CD8-positive, alpha-beta T cell (primary cell): ENCODE measurements at regions of chr4 and their contacts with region 1.

Region 1: DNA sequence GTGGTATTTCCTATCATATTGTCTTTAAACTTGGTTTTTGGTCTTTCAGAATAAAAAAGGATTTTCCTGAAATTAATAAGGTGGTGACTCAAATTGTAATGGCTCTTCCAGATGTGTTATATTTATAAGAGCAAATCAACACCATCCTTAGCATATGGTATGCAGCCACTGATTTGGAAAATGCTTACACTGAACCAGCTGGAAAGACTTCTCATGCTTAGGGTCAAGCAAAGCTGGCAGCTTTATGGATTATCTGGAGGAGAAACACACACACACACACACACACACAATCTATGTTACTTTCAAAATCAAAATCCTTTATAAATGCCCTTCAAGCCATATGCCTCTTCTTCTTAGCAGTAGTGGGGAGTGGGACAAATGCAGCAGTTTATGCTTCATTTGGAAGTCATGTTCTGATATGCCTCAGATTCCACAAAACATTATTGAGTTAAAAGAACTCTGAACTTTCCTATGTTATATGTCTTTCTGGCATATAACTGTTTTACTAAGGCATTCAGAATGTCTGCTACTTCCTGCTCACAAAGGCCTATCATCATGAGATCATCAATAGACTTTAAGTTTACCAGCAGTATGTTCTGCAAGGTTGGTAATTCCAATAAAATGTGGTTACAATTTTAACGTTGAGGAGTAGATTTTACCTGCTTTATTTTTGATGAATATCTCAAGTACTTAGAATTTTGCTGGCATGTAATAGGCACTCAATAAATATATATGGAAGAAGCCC is 72.9 kb upstream of the PRDM5 start:
- DNase-seq: no peak
- ATAC-seq: no peak
- H3K4me3 ChIP-seq: no peak overlapping the region
- H3K4me3 Mint-ChIP-seq: no peak overlapping the region
- H3K27ac ChIP-seq: no peak overlapping the region
- H3K27ac Mint-ChIP-seq: no peak overlapping the region
- H3K4me1 ChIP-seq: peaks cover 20% of the 10 kb centered on the region
- H3K4me1 Mint-ChIP-seq: peaks cover 28% of the 10 kb centered on the region
- H3K27me3 ChIP-seq: no peaks in the 10 kb centered on the region
- H3K27me3 Mint-ChIP-seq: no peaks in the 10 kb centered on the region
- CTCF ChIP-seq: no peak

Region 2: DNA sequence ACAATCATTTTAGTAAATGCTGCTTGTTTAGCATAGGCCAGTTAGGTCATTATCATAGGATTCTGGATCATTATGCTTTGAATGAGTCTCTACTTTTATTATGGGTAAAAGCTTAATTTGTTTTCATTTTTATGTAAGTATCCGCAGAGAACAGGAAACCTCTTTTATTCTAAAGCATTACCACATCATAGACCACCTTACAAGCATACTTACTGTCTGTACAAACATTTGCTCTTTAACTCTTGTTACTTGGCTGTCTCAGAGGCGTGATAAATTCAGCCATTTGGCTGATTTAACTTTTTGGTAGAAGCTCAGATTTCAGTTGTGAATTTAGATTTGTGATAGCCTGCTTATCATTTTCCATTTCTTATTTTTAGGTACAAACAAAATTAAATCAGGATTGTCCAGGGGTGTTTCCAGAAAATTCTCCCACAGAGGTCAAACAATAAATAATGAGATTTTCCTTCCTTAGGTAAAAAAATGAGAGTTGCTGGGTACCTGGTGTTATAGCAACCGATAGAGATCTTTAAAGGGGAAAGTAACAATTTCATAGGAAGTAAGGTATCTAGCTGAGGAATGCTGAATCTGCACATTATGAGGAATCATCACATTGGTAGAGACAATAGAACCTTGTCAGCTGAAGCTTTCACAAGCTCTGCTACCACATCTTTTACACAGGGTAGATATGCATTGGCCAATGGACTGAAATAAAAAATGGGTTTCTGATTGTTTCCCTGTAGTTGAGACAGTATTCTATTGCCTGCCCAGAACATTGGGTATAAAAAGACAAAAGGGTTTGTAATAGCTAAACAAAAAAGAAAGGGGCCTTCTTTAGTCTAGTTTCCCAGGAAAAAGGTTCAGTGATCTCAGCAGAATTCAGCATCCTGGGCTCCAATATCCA is 14.4 kb after region 1 on chr4:
- CTCF ChIA-PET with region 1: interaction called, 4 read pairs
- POLR2A ChIA-PET with region 1: interaction called, 4 read pairs
- intact Hi-C with region 1: loop called in 1 of 2 experiments (anchors 2 kb)
- DNase-seq: peak in 2 of 9 experiments; percentile 41 to 67
- ATAC-seq: peak; percentile 94
- H3K4me3 ChIP-seq: no peak overlapping the region
- H3K4me3 Mint-ChIP-seq: peak overlapping the region; percentile 60
- H3K27ac ChIP-seq: peak overlapping the region; percentile 0 to 24
- H3K27ac Mint-ChIP-seq: peak overlapping the region; percentile 92
- H3K4me1 ChIP-seq: peaks cover 81% of the 10 kb centered on the region
- H3K4me1 Mint-ChIP-seq: peaks cover 87% of the 10 kb centered on the region
- H3K27me3 ChIP-seq: no peaks in the 10 kb centered on the region
- H3K27me3 Mint-ChIP-seq: no peaks in the 10 kb centered on the region
- CTCF ChIP-seq: no peak